ENCODE measurements at regions of chr10 and their contacts with region 1.

Region 1: DNA sequence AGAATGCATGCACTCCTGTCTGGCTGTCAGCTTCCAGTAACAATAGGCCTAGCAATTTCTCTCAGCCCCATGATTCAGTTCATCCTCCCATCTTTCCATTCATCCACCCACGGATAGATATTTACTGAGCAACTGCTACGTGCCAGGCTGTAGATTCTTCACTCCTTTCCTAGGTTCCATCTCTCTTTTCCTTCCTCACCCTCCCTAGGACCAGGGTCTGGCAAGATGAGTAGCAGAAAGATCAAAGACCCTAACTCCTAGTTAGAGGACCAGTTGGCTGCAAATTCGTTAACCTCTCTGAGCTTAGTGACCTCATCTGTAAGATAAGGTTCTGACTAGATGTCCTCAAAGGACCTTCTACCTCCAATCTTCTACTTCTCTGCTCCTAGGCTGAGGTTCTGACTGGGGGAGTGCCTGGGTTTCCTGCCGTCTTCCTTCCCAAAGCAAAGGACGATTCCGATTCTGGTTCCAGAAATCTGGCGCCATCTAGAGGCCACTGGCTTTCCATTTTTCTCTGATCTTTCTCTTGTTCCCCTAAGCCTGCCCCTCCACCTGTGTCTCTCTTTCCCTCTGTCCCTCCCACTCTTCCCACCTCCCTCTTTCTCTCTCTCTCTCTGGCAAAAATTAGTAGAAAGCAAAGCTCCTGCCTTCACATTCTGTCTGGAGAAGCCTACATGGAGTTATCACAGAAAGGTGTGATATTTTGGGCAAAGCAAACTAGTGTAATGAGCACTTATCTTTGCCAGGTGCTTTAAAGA is 26.2 kb downstream of the TBATA start:
- DNase-seq: peak; percentile 80
- H3K4me3 ChIP-seq: no peak overlapping the region
- H3K27ac ChIP-seq: no peak overlapping the region
- H3K4me1 ChIP-seq: peaks cover 11% of the 10 kb centered on the region
- H3K27me3 ChIP-seq: no peaks in the 10 kb centered on the region
- CTCF ChIP-seq: peak; percentile 85

Region 2: GRCh38 chr10:70391654-70392053 is 367.3 kb before region 1 on chr10:
- CTCF ChIA-PET with region 1: no interaction called
- POLR2A ChIA-PET with region 1: no interaction called
- intact Hi-C with region 1: no loop called
- DNase-seq: no peak
- H3K4me3 ChIP-seq: no peak overlapping the region
- H3K27ac ChIP-seq: no peak overlapping the region
- H3K4me1 ChIP-seq: no peaks in the 10 kb centered on the region
- H3K27me3 ChIP-seq: no peaks in the 10 kb centered on the region
- CTCF ChIP-seq: no peak

Region 3: GRCh38 chr10:70461215-70461986 is 297.5 kb before region 1 on chr10:
- CTCF ChIA-PET with region 1: no interaction called
- POLR2A ChIA-PET with region 1: no interaction called
- intact Hi-C with region 1: loop called (anchors 1 kb)
- DNase-seq: peak; percentile 59
- H3K4me3 ChIP-seq: no peak overlapping the region
- H3K27ac ChIP-seq: no peak overlapping the region
- H3K4me1 ChIP-seq: peaks cover 20% of the 10 kb centered on the region
- H3K27me3 ChIP-seq: no peaks in the 10 kb centered on the region
- CTCF ChIP-seq: peak; percentile 71

Region 4: GRCh38 chr10:70558871-70559810 is 199.8 kb before region 1 on chr10:
- CTCF ChIA-PET with region 1: no interaction called
- POLR2A ChIA-PET with region 1: no interaction called
- intact Hi-C with region 1: loop called (anchors 2 kb)
- DNase-seq: peak; percentile 69
- H3K4me3 ChIP-seq: no peak overlapping the region
- H3K27ac ChIP-seq: no peak overlapping the region
- H3K4me1 ChIP-seq: peaks cover 21% of the 10 kb centered on the region
- H3K27me3 ChIP-seq: no peaks in the 10 kb centered on the region
- CTCF ChIP-seq: peak; percentile 74

Region 5: GRCh38 chr10:70619271-70620019 is 139.5 kb before region 1 on chr10:
- CTCF ChIA-PET with region 1: no interaction called
- POLR2A ChIA-PET with region 1: no interaction called
- intact Hi-C with region 1: loop called (anchors 1 kb)
- DNase-seq: peak; percentile 45
- H3K4me3 ChIP-seq: no peak overlapping the region
- H3K27ac ChIP-seq: no peak overlapping the region
- H3K4me1 ChIP-seq: no peaks in the 10 kb centered on the region
- H3K27me3 ChIP-seq: no peaks in the 10 kb centered on the region
- CTCF ChIP-seq: peak; percentile 44

Region 6: GRCh38 chr10:70774810-70775678 is 16.1 kb after region 1 on chr10:
- CTCF ChIA-PET with region 1: no interaction called
- POLR2A ChIA-PET with region 1: no interaction called
- intact Hi-C with region 1: no loop called
- DNase-seq: no peak
- H3K4me3 ChIP-seq: no peak overlapping the region
- H3K27ac ChIP-seq: no peak overlapping the region
- H3K4me1 ChIP-seq: no peaks in the 10 kb centered on the region
- H3K27me3 ChIP-seq: no peaks in the 10 kb centered on the region
- CTCF ChIP-seq: no peak

Measured in A673 (cell line).